Activated CD8-positive, alpha-beta T cell treated with anti-CD3 and anti-CD28 coated beads for 36 hours (primary cell): ENCODE measurements at regions of chr1 and their contacts with region 1.

Region 1: DNA sequence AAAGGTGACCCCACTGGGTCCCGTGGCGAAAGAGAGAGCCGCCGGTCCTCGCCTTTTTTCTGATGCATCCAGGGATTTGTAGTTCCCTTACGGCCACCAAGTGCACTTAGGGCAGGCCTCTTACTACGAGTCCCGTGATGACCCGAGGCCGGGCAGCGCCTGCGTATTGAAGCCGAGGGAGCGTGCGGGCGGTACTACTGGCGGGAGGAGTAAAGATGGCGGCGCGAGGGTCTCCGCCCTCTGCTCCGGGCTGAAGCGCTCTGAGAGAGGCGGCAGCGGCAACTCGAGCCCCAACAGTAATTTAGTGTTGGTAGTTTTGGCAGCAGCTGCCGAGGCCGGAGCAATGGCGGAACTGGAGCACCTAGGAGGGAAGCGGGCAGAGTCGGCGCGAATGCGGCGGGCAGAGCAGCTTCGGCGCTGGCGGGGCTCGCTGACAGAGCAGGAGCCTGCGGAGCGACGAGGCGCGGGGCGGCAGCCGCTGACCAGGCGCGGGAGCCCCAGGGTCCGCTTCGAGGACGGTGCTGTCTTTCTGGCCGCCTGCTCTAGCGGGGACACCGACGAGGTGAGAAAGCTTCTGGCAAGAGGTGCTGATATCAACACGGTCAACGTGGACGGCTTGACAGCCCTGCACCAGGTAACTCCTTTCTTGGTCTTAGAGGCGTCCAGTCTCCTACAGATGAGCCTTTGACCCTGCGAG is at the start of gene PPP1R12B:
- DNase-seq: peak; percentile 98
- ATAC-seq: peak; percentile 98
- H3K4me3 Mint-ChIP-seq: peak within 1 kb of the TSS; percentile 96
- H3K27ac Mint-ChIP-seq: peak within 1 kb of the TSS; percentile 91
- H3K4me1 Mint-ChIP-seq: peaks cover 28% of the 10 kb centered on the region
- H3K27me3 Mint-ChIP-seq: no peaks in the 10 kb centered on the region
- CTCF ChIP-seq: no peak
- total RNA-seq, gene PPP1R12B: 13.0 to 14.1 TPM

Region 2: DNA sequence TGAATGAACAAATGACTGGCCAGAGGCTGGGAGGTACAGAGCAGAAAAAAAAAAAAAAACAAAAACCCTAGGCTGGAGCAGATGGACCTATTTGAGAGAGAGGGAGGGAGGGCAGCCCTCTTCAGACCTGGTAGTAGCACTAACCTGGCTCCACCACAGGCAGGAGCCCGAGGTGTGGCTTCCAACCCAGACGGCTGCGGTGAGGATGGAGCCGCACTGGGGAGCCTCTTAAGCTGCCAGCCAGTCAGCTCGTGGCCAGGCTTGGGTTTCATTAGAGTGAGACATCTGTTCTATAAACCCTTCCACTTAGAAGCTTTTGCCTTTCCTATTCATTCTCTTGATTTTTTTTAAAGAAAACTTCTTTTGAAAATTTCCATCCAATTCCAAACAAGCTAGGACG is 138.3 kb before region 1 on chr1:
- CTCF ChIA-PET with region 1: no interaction called
- POLR2A ChIA-PET with region 1: no interaction called
- intact Hi-C with region 1: no loop called
- DNase-seq: no peak
- ATAC-seq: peak; percentile 32
- H3K4me3 Mint-ChIP-seq: no peak overlapping the region
- H3K27ac Mint-ChIP-seq: no peak overlapping the region
- H3K4me1 Mint-ChIP-seq: peaks cover 5% of the 10 kb centered on the region
- H3K27me3 Mint-ChIP-seq: peaks cover 32% of the 10 kb centered on the region
- CTCF ChIP-seq: no peak

Region 3: DNA sequence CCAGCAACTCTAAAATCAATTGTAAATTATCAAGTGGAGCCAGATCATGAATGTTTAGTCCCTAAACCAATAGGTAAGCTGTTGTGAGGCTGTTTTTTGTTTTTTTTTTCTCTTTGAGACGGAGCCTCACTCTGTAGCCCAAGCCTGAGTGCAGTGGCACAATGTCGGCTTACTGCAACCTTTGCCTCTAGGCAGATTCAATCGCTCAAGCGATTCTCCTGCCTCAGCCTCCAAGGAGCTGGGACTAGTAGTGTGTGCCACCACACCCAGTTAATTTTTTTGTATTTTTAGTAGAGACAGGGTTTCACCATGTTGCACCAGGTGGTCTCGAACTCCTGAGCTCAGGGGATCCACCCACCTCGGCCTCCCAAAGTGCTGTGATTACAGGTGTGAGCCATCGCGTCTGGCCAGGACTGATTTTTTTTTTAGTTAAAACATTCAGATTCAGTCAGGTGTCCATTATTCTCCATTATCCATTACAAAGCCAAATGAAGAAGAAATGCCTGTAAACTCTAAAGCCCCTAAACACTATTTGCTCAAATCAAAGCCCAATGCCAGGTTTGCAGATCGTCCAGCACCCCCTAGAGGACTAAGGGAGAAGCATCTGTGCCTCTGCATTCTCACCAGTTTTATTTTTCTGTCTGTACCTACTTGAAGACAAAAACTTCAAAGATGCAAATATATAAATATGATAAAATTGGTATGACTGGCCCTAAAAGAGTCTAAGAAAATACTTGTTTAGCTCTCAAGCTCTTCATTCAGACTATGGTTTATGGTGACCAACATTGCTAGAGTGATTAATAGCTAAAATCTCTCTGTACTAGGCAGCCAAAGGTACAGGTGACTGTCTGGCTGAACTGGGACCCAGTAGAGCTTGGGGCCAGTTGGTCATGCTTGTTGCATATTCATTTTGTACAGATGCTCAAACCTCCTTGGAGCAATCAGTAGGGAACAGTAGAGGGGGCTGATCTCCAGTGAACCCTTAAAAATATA is 223.0 kb after region 1 on chr1:
- CTCF ChIA-PET with region 1: interaction called, 5 read pairs
- POLR2A ChIA-PET with region 1: no interaction called
- intact Hi-C with region 1: loop called (anchors 5 kb)
- DNase-seq: peak; percentile 53
- ATAC-seq: peak; percentile 73
- H3K4me3 Mint-ChIP-seq: no peak overlapping the region
- H3K27ac Mint-ChIP-seq: no peak overlapping the region
- H3K4me1 Mint-ChIP-seq: peaks cover 3% of the 10 kb centered on the region
- H3K27me3 Mint-ChIP-seq: no peaks in the 10 kb centered on the region
- CTCF ChIP-seq: peak; percentile 91

Region 4: DNA sequence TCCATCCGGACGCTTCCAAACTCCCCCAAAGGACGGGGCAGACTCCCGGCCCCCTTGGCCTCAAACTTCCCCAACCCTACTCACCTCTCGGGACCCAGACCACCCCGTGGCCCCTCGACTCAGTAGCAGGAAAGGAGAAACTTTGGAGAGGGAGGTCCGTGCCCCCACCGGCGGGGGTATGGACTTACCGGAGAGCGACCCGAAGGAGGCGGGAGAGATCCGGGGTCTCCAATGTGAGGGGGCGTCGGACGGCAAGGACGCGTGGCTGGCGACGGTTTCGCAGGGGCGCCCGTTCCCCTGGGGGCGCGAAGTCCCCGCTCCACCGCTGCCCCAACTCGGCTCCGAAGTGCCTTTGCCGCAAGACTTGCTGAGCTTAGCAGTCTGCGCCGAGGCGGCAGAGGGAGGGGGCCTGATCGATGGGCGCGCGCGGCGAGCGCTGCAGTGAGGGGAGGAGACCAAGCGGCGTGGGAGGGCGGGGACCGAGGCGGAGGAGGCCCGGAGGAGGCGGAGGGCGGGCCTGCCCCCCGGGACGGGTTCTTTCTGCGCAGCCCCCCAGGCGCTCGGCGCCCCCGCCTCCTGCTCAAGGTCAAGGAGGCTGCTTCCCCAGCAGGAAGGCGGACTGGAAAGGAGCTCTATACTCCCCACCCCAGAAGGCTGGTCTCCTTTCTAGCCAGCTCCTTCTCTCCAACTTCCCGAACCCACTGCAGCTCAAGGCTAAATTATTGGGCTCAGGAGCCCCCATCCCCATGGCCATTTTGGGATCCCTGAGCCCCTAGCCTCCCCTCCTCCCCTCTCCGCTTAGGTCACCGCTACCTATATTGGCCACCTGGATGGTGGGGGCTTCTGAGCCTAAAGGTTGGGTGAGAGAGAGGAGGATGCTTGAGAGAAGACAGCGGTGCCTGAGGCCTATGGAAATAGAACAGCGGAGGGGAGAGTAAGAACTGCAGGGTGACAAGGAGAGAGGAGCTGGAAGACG is 361.7 kb after region 1 on chr1 and contains the start of gene SYT2:
- CTCF ChIA-PET with region 1: interaction called, 3 read pairs
- POLR2A ChIA-PET with region 1: no interaction called
- intact Hi-C with region 1: loop called (anchors 10 kb)
- DNase-seq: peak; percentile 24
- ATAC-seq: peak; percentile 60
- H3K4me3 Mint-ChIP-seq: no peak within 1 kb of the TSS
- H3K27ac Mint-ChIP-seq: no peak within 1 kb of the TSS
- H3K4me1 Mint-ChIP-seq: peaks cover 3% of the 10 kb centered on the region
- H3K27me3 Mint-ChIP-seq: peaks cover 56% of the 10 kb centered on the region
- CTCF ChIP-seq: no peak
- total RNA-seq, gene SYT2: not detected